HepG2 (cell line): ENCODE measurements at regions of chr6 and their contacts with region 1.

Region 1: GRCh38 chr6:71012866-71013469 is 56.1 kb upstream of the B3GAT2 start:
- DNase-seq: peak; percentile 57
- ATAC-seq: peak; percentile 94
- H3K4me3 ChIP-seq: no peak overlapping the region
- H3K27ac ChIP-seq: no peak overlapping the region
- H3K4me1 ChIP-seq: no peaks in the 10 kb centered on the region
- H3K27me3 ChIP-seq: no peaks in the 10 kb centered on the region
- CTCF ChIP-seq: peak; percentile 82
- EP300 ChIP-seq: no peak
- POLR2A ChIP-seq: no peak
- RAD21 ChIP-seq: peak; percentile 55; the same call in 1 of the 2 replicates

Region 2: GRCh38 chr6:69917834-69918233 is 1095.1 kb before region 1 on chr6:
- CTCF ChIA-PET with region 1: no interaction called
- POLR2A ChIA-PET with region 1: no interaction called
- in situ Hi-C with region 1: no loop called
- intact Hi-C with region 1: no loop called
- DNase-seq: no peak
- ATAC-seq: no peak
- H3K4me3 ChIP-seq: no peak overlapping the region
- H3K27ac ChIP-seq: no peak overlapping the region
- H3K4me1 ChIP-seq: no peaks in the 10 kb centered on the region
- H3K27me3 ChIP-seq: no peaks in the 10 kb centered on the region
- CTCF ChIP-seq: no peak
- EP300 ChIP-seq: no peak
- POLR2A ChIP-seq: no peak
- RAD21 ChIP-seq: no peak

Region 3: GRCh38 chr6:70210462-70210861 is 802.5 kb before region 1 on chr6:
- CTCF ChIA-PET with region 1: no interaction called
- POLR2A ChIA-PET with region 1: no interaction called
- in situ Hi-C with region 1: no loop called
- intact Hi-C with region 1: loop called (anchors 1 kb)
- DNase-seq: peak; percentile 14
- ATAC-seq: peak; percentile 72
- H3K4me3 ChIP-seq: no peak overlapping the region
- H3K27ac ChIP-seq: no peak overlapping the region
- H3K4me1 ChIP-seq: no peaks in the 10 kb centered on the region
- H3K27me3 ChIP-seq: peaks cover 0 to 1% of the 10 kb centered on the region in 2 experiments; a peak in 1 of 5 replicates
- CTCF ChIP-seq: peak; percentile 24
- EP300 ChIP-seq: no peak
- POLR2A ChIP-seq: no peak
- RAD21 ChIP-seq: no peak

Region 4: DNA sequence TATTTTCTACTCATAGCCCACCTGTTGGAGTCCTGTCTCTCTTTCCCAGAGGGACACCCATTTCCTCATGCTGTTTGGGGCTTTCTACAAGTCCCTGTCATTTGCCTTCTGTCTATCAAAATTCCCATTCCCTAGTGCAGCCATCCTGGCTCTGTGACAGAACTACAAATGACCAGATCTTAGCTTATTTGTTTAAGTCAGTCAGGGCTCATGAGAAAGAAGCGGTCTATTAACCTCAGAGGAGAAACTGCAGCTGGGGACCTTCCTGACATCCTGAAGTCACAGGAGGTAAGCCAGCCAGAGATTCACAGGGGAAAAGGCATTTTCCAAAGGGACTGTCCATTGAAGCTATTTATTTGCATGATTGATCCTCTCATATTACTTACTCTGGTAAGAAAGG is 708.4 kb before region 1 on chr6:
- CTCF ChIA-PET with region 1: no interaction called
- POLR2A ChIA-PET with region 1: no interaction called
- in situ Hi-C with region 1: loop called (anchors 10 kb)
- intact Hi-C with region 1: no loop called
- DNase-seq: no peak
- ATAC-seq: no peak
- H3K4me3 ChIP-seq: no peak overlapping the region
- H3K27ac ChIP-seq: no peak overlapping the region
- H3K4me1 ChIP-seq: no peaks in the 10 kb centered on the region
- H3K27me3 ChIP-seq: peaks cover 0 to 2% of the 10 kb centered on the region in 2 experiments; a peak in 1 of 5 replicates
- CTCF ChIP-seq: no peak
- EP300 ChIP-seq: no peak
- POLR2A ChIP-seq: no peak
- RAD21 ChIP-seq: no peak

Region 5: GRCh38 chr6:70369332-70369950 is 643.5 kb before region 1 on chr6:
- CTCF ChIA-PET with region 1: interaction called, 4 read pairs
- POLR2A ChIA-PET with region 1: no interaction called
- in situ Hi-C with region 1: no loop called
- intact Hi-C with region 1: loop called (anchors 2 kb)
- DNase-seq: peak; percentile 41
- ATAC-seq: peak; percentile 87
- H3K4me3 ChIP-seq: no peak overlapping the region
- H3K27ac ChIP-seq: no peak overlapping the region
- H3K4me1 ChIP-seq: no peaks in the 10 kb centered on the region
- H3K27me3 ChIP-seq: peaks cover 1 to 13% of the 10 kb centered on the region in 2 experiments; a peak in 2 of 5 replicates
- CTCF ChIP-seq: peak; percentile 89
- EP300 ChIP-seq: no peak
- POLR2A ChIP-seq: no peak
- RAD21 ChIP-seq: peak; percentile 55; the same call in 1 of the 2 replicates

Region 6: DNA sequence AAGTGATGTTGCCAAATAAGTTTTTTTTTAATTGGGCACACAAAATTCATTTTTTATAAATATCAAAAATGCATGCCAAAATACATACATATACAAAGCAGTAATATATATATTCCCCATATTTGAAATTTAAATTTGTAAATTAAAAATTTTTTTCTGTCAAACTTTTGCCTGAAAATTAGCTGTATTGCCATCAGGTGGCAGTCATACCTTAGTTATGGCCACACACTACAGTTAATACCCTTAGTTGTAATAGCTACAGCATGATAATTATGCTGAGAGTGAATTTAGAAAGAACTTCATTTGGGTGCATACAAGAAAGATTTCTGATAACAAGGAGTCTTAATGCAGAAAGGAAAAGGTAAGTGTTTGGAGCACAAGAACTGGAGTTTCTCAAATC is 492.4 kb before region 1 on chr6:
- CTCF ChIA-PET with region 1: no interaction called
- POLR2A ChIA-PET with region 1: no interaction called
- in situ Hi-C with region 1: no loop called
- intact Hi-C with region 1: loop called (anchors 5 kb)
- DNase-seq: peak; percentile 3
- ATAC-seq: no peak
- H3K4me3 ChIP-seq: no peak overlapping the region
- H3K27ac ChIP-seq: no peak overlapping the region
- H3K4me1 ChIP-seq: peaks cover 11% of the 10 kb centered on the region; the same call in 1 of the 2 replicates
- H3K27me3 ChIP-seq: no peaks in the 10 kb centered on the region
- CTCF ChIP-seq: peak; percentile 36
- EP300 ChIP-seq: no peak
- POLR2A ChIP-seq: no peak
- RAD21 ChIP-seq: no peak; the same call in 1 of the 2 replicates

Region 7: GRCh38 chr6:70884074-70884983 is 128.6 kb before region 1 on chr6:
- CTCF ChIA-PET with region 1: no interaction called
- POLR2A ChIA-PET with region 1: no interaction called
- in situ Hi-C with region 1: no loop called
- intact Hi-C with region 1: loop called (anchors 10 kb)
- DNase-seq: peak; percentile 59
- ATAC-seq: peak; percentile 97
- H3K4me3 ChIP-seq: peak overlapping the region in 1 of 3 experiments; percentile 20; a peak in 1 of 6 replicates
- H3K27ac ChIP-seq: no peak overlapping the region
- H3K4me1 ChIP-seq: peaks cover 16% of the 10 kb centered on the region; the same call in 1 of the 2 replicates
- H3K27me3 ChIP-seq: peaks cover 0 to 20% of the 10 kb centered on the region in 2 experiments; a peak in 3 of 5 replicates
- CTCF ChIP-seq: peak; percentile 92
- EP300 ChIP-seq: no peak
- POLR2A ChIP-seq: no peak
- RAD21 ChIP-seq: peak; percentile 93

Region 8: GRCh38 chr6:70980725-70981124 is 32.2 kb before region 1 on chr6:
- CTCF ChIA-PET with region 1: no interaction called
- POLR2A ChIA-PET with region 1: no interaction called
- in situ Hi-C with region 1: no loop called
- intact Hi-C with region 1: no loop called
- DNase-seq: no peak
- ATAC-seq: no peak
- H3K4me3 ChIP-seq: no peak overlapping the region
- H3K27ac ChIP-seq: no peak overlapping the region
- H3K4me1 ChIP-seq: no peaks in the 10 kb centered on the region
- H3K27me3 ChIP-seq: no peaks in the 10 kb centered on the region
- CTCF ChIP-seq: no peak
- EP300 ChIP-seq: no peak
- POLR2A ChIP-seq: no peak
- RAD21 ChIP-seq: no peak

Region 9: DNA sequence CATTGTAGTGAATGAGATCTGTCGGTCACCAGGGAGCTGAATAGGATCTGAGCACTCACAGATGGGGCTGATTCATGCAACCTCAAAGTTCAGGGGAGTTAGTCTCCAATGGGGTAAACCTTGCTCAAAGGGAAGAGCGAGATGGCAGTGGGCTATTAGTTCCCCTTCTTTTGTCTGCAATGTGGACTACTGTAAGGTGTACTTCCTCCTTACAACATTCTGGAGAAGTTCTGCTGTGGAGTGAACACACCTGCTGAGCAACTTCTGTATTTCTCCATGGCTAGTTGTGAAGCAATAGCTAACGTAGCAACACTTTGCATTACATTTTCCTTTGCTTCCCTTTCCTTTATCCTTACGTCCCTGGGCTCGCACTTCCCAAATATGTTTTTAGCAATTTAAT is 78.2 kb after region 1 on chr6:
- CTCF ChIA-PET with region 1: no interaction called
- POLR2A ChIA-PET with region 1: no interaction called
- in situ Hi-C with region 1: no loop called
- intact Hi-C with region 1: no loop called
- DNase-seq: no peak
- ATAC-seq: no peak
- H3K4me3 ChIP-seq: no peak overlapping the region
- H3K27ac ChIP-seq: no peak overlapping the region
- H3K4me1 ChIP-seq: no peaks in the 10 kb centered on the region
- H3K27me3 ChIP-seq: peaks cover 1 to 2% of the 10 kb centered on the region in 2 experiments; a peak in 1 of 5 replicates
- CTCF ChIP-seq: no peak
- EP300 ChIP-seq: no peak
- POLR2A ChIP-seq: no peak
- RAD21 ChIP-seq: no peak